B cell (primary cell): ENCODE measurements at regions of chr5 and their contacts with region 1.

Region 1: GRCh38 chr5:137888857-137889759 is at the start of gene PKD2L2:
- DNase-seq: peak; percentile 92
- ATAC-seq: peak; percentile 99
- H3K4me3 ChIP-seq: peak within 1 kb of the TSS; percentile 39 to 81 (median 77)
- H3K4me3 Mint-ChIP-seq: peak within 1 kb of the TSS; percentile 90
- H3K27ac ChIP-seq: peak within 1 kb of the TSS; percentile 93 to 95
- H3K27ac Mint-ChIP-seq: peak within 1 kb of the TSS; percentile 97
- H3K4me1 ChIP-seq: peaks cover 20 to 22% of the 10 kb centered on the region in 2 donors
- H3K4me1 Mint-ChIP-seq: peaks cover 36% of the 10 kb centered on the region
- H3K27me3 ChIP-seq: no peaks in the 10 kb centered on the region
- H3K27me3 Mint-ChIP-seq: no peaks in the 10 kb centered on the region
- CTCF ChIP-seq: no peak
- total RNA-seq, gene PKD2L2: 0.37 and 0.63 TPM in 2 replicates

Region 2: GRCh38 chr5:137822158-137822764 is 66.8 kb before region 1 on chr5:
- CTCF ChIA-PET with region 1: no interaction called
- POLR2A ChIA-PET with region 1: no interaction called
- intact Hi-C with region 1: no loop called
- DNase-seq: peak; percentile 22
- ATAC-seq: no peak
- H3K4me3 ChIP-seq: no peak overlapping the region
- H3K4me3 Mint-ChIP-seq: no peak overlapping the region
- H3K27ac ChIP-seq: no peak overlapping the region
- H3K27ac Mint-ChIP-seq: no peak overlapping the region
- H3K4me1 ChIP-seq: no peaks in the 10 kb centered on the region
- H3K4me1 Mint-ChIP-seq: no peaks in the 10 kb centered on the region
- H3K27me3 ChIP-seq: no peaks in the 10 kb centered on the region
- H3K27me3 Mint-ChIP-seq: no peaks in the 10 kb centered on the region
- CTCF ChIP-seq: peak; percentile 13

Region 3: DNA sequence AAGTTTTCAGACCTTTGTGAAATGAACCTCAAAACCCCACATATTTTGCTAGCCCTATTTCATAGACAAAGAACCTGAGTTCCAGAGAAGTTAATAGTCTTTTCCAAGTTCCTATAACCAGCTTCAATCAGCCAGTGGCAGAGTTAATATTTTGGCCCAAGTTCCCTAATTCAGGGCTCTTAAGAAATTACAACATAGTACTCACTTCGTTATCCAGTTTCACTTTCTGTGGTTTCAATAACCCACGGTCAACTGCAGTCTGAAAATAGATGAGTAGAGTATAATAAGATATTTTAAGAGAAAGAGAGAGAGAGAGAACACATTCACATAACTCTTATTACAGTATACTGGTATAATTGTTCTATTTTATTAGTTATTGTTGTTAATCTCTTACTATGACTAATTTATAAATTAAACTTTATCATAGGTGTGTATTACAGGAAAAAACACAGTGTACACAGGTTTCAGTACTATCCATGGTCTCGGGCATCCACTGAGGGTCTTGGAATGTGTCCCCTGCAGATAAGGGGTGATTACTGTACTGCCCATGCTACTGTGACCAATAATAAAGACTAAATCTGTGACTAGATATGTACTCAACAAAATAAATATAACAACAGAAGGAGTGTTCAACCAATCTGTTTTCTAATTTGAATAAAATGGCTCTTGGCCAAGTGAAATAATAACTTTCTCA is 30.7 kb before region 1 on chr5:
- CTCF ChIA-PET with region 1: no interaction called
- POLR2A ChIA-PET with region 1: no interaction called
- intact Hi-C with region 1: no loop called
- DNase-seq: peak; percentile 55
- ATAC-seq: peak; percentile 70
- H3K4me3 ChIP-seq: peak overlapping the region in 2 of 5 experiments; percentile 2 to 45
- H3K4me3 Mint-ChIP-seq: peak overlapping the region; percentile 66
- H3K27ac ChIP-seq: peak overlapping the region in 1 of 2 donors; percentile 55
- H3K27ac Mint-ChIP-seq: peak overlapping the region; percentile 70
- H3K4me1 ChIP-seq: peaks cover 18 to 20% of the 10 kb centered on the region in 2 donors
- H3K4me1 Mint-ChIP-seq: peaks cover 24% of the 10 kb centered on the region
- H3K27me3 ChIP-seq: no peaks in the 10 kb centered on the region
- H3K27me3 Mint-ChIP-seq: no peaks in the 10 kb centered on the region
- CTCF ChIP-seq: no peak

Region 4: GRCh38 chr5:137901011-137901817 is 12.1 kb after region 1 on chr5:
- CTCF ChIA-PET with region 1: interaction called, 6 read pairs
- POLR2A ChIA-PET with region 1: interaction called, 10 read pairs
- intact Hi-C with region 1: no loop called
- DNase-seq: peak; percentile 38
- ATAC-seq: no peak
- H3K4me3 ChIP-seq: peak overlapping the region in 1 of 5 experiments; percentile 18
- H3K4me3 Mint-ChIP-seq: peak overlapping the region; percentile 29
- H3K27ac ChIP-seq: peak overlapping the region; percentile 1 to 71
- H3K27ac Mint-ChIP-seq: peak overlapping the region; percentile 62
- H3K4me1 ChIP-seq: peaks cover 53 to 76% of the 10 kb centered on the region in 2 donors
- H3K4me1 Mint-ChIP-seq: peaks cover 61% of the 10 kb centered on the region
- H3K27me3 ChIP-seq: no peaks in the 10 kb centered on the region
- H3K27me3 Mint-ChIP-seq: no peaks in the 10 kb centered on the region
- CTCF ChIP-seq: no peak

Region 5: DNA sequence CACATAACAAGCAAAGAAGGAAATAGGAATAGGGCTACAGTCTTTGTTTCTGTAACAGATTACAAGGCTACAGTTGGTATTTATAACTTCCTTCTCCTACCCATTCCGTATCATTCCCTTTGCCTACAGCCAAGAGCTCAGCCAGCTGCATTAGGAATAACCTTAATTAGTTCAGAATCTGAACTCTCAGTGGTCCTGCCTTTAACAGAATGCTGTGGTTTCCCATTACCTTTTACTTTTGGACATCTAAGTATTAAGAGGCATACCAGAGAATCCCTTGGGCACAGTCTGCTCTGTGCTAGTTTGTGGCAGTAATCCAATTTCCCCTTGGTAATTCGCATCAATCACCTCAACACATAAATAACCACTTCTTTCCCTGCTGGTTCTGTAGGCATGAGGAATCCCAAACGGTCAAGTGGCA is 44.4 kb after region 1 on chr5:
- CTCF ChIA-PET with region 1: no interaction called
- POLR2A ChIA-PET with region 1: no interaction called
- intact Hi-C with region 1: loop called (anchors 5 kb)
- DNase-seq: no peak
- ATAC-seq: no peak
- H3K4me3 ChIP-seq: no peak overlapping the region
- H3K4me3 Mint-ChIP-seq: no peak overlapping the region
- H3K27ac ChIP-seq: peak overlapping the region in 1 of 2 donors; percentile 1
- H3K27ac Mint-ChIP-seq: no peak overlapping the region
- H3K4me1 ChIP-seq: peaks cover 0 to 5% of the 10 kb centered on the region in 2 donors
- H3K4me1 Mint-ChIP-seq: peaks cover 16% of the 10 kb centered on the region
- H3K27me3 ChIP-seq: no peaks in the 10 kb centered on the region
- H3K27me3 Mint-ChIP-seq: no peaks in the 10 kb centered on the region
- CTCF ChIP-seq: no peak

Region 6: GRCh38 chr5:138024117-138024516 is 135.0 kb after region 1 on chr5:
- CTCF ChIA-PET with region 1: no interaction called
- POLR2A ChIA-PET with region 1: no interaction called
- intact Hi-C with region 1: loop called (anchors 1 kb)
- DNase-seq: no peak
- ATAC-seq: no peak
- H3K4me3 ChIP-seq: no peak overlapping the region
- H3K4me3 Mint-ChIP-seq: no peak overlapping the region
- H3K27ac ChIP-seq: no peak overlapping the region
- H3K27ac Mint-ChIP-seq: no peak overlapping the region
- H3K4me1 ChIP-seq: peaks cover 46 to 62% of the 10 kb centered on the region in 2 donors
- H3K4me1 Mint-ChIP-seq: peaks cover 74% of the 10 kb centered on the region
- H3K27me3 ChIP-seq: no peaks in the 10 kb centered on the region
- H3K27me3 Mint-ChIP-seq: no peaks in the 10 kb centered on the region
- CTCF ChIP-seq: no peak